Activated CD4-positive, alpha-beta memory T cell treated with anti-CD3 and anti-CD28 coated beads, Interleukin-2, amount 10 ng/mL, durations not matched to agents 7 days and 5 days (primary cell): ENCODE measurements at regions of chr7 and their contacts with region 1.

Region 1: GRCh38 chr7:142632291-142633134 is 116.8 kb upstream of the PRSS1 start:
- DNase-seq: peak; percentile 60
- H3K4me3 Mint-ChIP-seq: no peak overlapping the region
- H3K27ac Mint-ChIP-seq: peak overlapping the region; percentile 29
- H3K4me1 Mint-ChIP-seq: peaks cover 13% of the 10 kb centered on the region
- H3K27me3 Mint-ChIP-seq: peaks cover 15% of the 10 kb centered on the region

Region 2: GRCh38 chr7:142319970-142320369 is 312.5 kb before region 1 on chr7:
- CTCF ChIA-PET with region 1: no interaction called
- POLR2A ChIA-PET with region 1: no interaction called
- DNase-seq: peak; percentile 41
- H3K4me3 Mint-ChIP-seq: peak overlapping the region; percentile 40
- H3K27ac Mint-ChIP-seq: peak overlapping the region; percentile 82
- H3K4me1 Mint-ChIP-seq: peaks cover 14% of the 10 kb centered on the region
- H3K27me3 Mint-ChIP-seq: peaks cover 15% of the 10 kb centered on the region

Region 3: DNA sequence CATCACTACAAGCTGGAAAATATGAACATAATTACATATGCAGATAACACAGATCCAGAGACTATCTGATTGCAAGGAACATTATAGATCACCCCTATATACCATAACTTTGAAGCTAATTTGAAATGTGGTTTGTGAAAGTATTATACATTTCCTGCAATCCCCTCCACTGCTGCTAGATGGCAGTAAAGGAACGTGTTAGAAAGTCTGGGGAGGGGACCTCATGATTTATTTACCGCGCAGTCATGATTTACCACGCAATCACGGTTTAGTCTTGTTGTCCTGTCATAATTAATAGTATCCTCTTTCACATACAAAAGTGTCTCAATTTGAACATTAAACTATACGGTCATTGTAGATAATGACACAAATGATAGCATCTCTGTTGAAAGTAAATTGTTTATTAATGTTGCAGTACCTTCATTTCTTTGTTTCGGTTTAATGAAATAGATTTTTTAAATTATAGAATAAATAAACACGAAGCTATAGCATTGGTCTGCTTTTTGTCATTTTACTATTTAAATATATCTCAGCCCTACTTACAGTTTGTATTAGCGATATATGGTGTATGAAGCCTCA is 28.6 kb before region 1 on chr7:
- CTCF ChIA-PET with region 1: interaction called, 15 read pairs
- POLR2A ChIA-PET with region 1: no interaction called
- DNase-seq: peak; percentile 51
- H3K4me3 Mint-ChIP-seq: no peak overlapping the region
- H3K27ac Mint-ChIP-seq: no peak overlapping the region
- H3K4me1 Mint-ChIP-seq: peaks cover 10% of the 10 kb centered on the region
- H3K27me3 Mint-ChIP-seq: peaks cover 11% of the 10 kb centered on the region

Region 4: DNA sequence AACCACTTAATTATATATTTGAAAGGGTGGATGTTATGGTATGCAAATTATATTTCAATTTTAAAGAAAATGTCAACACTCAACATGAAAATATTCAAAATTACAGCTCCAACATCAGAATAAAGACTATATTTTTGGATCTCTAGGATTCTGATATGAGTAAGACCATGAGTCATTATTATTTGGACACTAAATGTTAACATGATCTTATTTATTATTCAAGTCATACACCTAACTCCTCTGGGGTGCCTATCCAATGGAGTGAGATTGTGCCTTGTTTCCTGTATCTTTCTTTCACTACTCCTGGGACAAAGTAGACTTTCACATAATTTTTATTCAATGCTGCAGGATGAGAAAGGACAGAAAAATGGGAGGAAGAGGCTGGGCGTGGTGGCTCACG is 18.4 kb before region 1 on chr7:
- CTCF ChIA-PET with region 1: no interaction called
- POLR2A ChIA-PET with region 1: no interaction called
- DNase-seq: no peak
- H3K4me3 Mint-ChIP-seq: no peak overlapping the region
- H3K27ac Mint-ChIP-seq: no peak overlapping the region
- H3K4me1 Mint-ChIP-seq: peaks cover 34% of the 10 kb centered on the region
- H3K27me3 Mint-ChIP-seq: peaks cover 9% of the 10 kb centered on the region